PC-3 (cell line): ENCODE measurements at regions of chr5 and their contacts with region 1.

Region 1: GRCh38 chr5:101590384-101590783 is 687.3 kb upstream of the ST8SIA4 start:
- DNase-seq: peak; percentile 18
- ATAC-seq: no peak
- H3K4me3 ChIP-seq: no peak overlapping the region
- H3K27ac ChIP-seq: no peak overlapping the region
- H3K4me1 ChIP-seq: no peaks in the 10 kb centered on the region
- H3K27me3 ChIP-seq: no peaks in the 10 kb centered on the region
- CTCF ChIP-seq: peak; percentile 61

Region 2: GRCh38 chr5:101364469-101364868 is 225.9 kb before region 1 on chr5:
- CTCF ChIA-PET with region 1: no interaction called
- POLR2A ChIA-PET with region 1: no interaction called
- intact Hi-C with region 1: loop called (anchors 1 kb)
- DNase-seq: no peak
- ATAC-seq: no peak
- H3K4me3 ChIP-seq: no peak overlapping the region
- H3K27ac ChIP-seq: no peak overlapping the region
- H3K4me1 ChIP-seq: no peaks in the 10 kb centered on the region
- H3K27me3 ChIP-seq: no peaks in the 10 kb centered on the region
- CTCF ChIP-seq: no peak

Region 3: DNA sequence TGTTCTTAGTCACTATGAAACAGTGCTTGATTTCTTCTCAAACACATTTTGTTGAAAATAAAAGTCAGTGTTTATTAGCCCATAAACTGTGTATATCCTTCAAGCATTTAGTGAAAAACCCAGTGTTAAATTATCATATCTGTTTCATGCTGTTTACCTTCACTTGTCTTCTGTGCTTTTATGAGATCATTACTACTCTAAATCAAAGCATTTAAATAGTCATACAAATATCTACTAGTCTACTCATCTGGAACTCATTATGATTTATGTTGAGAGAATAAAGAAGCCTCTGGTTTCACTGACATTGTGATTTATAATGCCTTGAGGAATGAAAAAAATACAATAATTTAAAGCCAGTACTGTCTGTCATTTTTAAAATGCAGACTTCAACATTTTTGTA is 339.2 kb after region 1 on chr5:
- CTCF ChIA-PET with region 1: no interaction called
- POLR2A ChIA-PET with region 1: no interaction called
- intact Hi-C with region 1: no loop called
- DNase-seq: no peak
- ATAC-seq: peak; percentile 45
- H3K4me3 ChIP-seq: no peak overlapping the region
- H3K27ac ChIP-seq: no peak overlapping the region
- H3K4me1 ChIP-seq: no peaks in the 10 kb centered on the region
- H3K27me3 ChIP-seq: no peaks in the 10 kb centered on the region
- CTCF ChIP-seq: no peak